ENCODE measurements at regions of chr1 and their contacts with region 1.

Region 1: GRCh38 chr1:181142096-181142958 is 53.8 kb downstream of the IER5 start:
- DNase-seq: no peak
- ATAC-seq: peak; percentile 92
- H3K4me3 ChIP-seq: no peak overlapping the region
- H3K27ac ChIP-seq: no peak overlapping the region
- H3K4me1 ChIP-seq: peaks cover 37% of the 10 kb centered on the region
- H3K27me3 ChIP-seq: no peaks in the 10 kb centered on the region
- CTCF ChIP-seq: peak; percentile 94 to 98 (median 98); a peak in 5 of 6 replicates
- EP300 ChIP-seq: no peak
- POLR2A ChIP-seq: no peak
- RAD21 ChIP-seq: peak; percentile 99

Region 2: GRCh38 chr1:180863158-180863775 is 279.1 kb before region 1 on chr1:
- CTCF ChIA-PET with region 1: interaction called, 10 read pairs
- POLR2A ChIA-PET with region 1: no interaction called
- RAD21 ChIA-PET with region 1: interaction called, 7 read pairs
- SMC1A ChIA-PET with region 1: interaction called, 6 read pairs
- in situ Hi-C with region 1: no loop called
- intact Hi-C with region 1: no loop called
- DNase-seq: no peak
- ATAC-seq: no peak
- H3K4me3 ChIP-seq: no peak overlapping the region
- H3K27ac ChIP-seq: no peak overlapping the region
- H3K4me1 ChIP-seq: no peaks in the 10 kb centered on the region
- H3K27me3 ChIP-seq: no peaks in the 10 kb centered on the region
- CTCF ChIP-seq: peak; percentile 51 to 69 (median 59); a peak in 5 of 6 replicates
- EP300 ChIP-seq: no peak
- POLR2A ChIP-seq: no peak
- RAD21 ChIP-seq: peak; percentile 88

Region 3: GRCh38 chr1:180920702-180921101 is 221.6 kb before region 1 on chr1:
- CTCF ChIA-PET with region 1: interaction called, 18 read pairs
- POLR2A ChIA-PET with region 1: no interaction called
- RAD21 ChIA-PET with region 1: interaction called, 10 read pairs
- SMC1A ChIA-PET with region 1: interaction called, 19 read pairs
- in situ Hi-C with region 1: no loop called
- intact Hi-C with region 1: no loop called
- DNase-seq: no peak
- ATAC-seq: peak; percentile 38; the same call in 1 of the 3 replicates
- H3K4me3 ChIP-seq: no peak overlapping the region
- H3K27ac ChIP-seq: no peak overlapping the region
- H3K4me1 ChIP-seq: peaks cover 9% of the 10 kb centered on the region
- H3K27me3 ChIP-seq: peaks cover 0 to 3% of the 10 kb centered on the region in 2 experiments; a peak in 1 of 4 replicates
- CTCF ChIP-seq: peak; percentile 41 to 57 (median 48)
- EP300 ChIP-seq: no peak
- POLR2A ChIP-seq: no peak
- RAD21 ChIP-seq: peak; percentile 33; the same call in 1 of the 2 replicates

Region 4: GRCh38 chr1:181021811-181022434 is 120.4 kb before region 1 on chr1:
- CTCF ChIA-PET with region 1: interaction called, 26 read pairs
- POLR2A ChIA-PET with region 1: interaction called, 8 read pairs
- RAD21 ChIA-PET with region 1: interaction called, 14 read pairs
- SMC1A ChIA-PET with region 1: interaction called, 14 read pairs
- in situ Hi-C with region 1: no loop called
- intact Hi-C with region 1: no loop called
- DNase-seq: no peak
- ATAC-seq: peak; percentile 76
- H3K4me3 ChIP-seq: peak overlapping the region; percentile 90
- H3K27ac ChIP-seq: peak overlapping the region; percentile 89
- H3K4me1 ChIP-seq: peaks cover 12% of the 10 kb centered on the region
- H3K27me3 ChIP-seq: no peaks in the 10 kb centered on the region
- CTCF ChIP-seq: no peak
- EP300 ChIP-seq: no peak
- POLR2A ChIP-seq: no peak
- RAD21 ChIP-seq: no peak

Region 5: GRCh38 chr1:181062836-181063428 is 79.4 kb before region 1 on chr1:
- CTCF ChIA-PET with region 1: interaction called, 35 read pairs
- POLR2A ChIA-PET with region 1: interaction called, 9 read pairs
- RAD21 ChIA-PET with region 1: interaction called, 29 read pairs
- SMC1A ChIA-PET with region 1: interaction called, 46 read pairs
- in situ Hi-C with region 1: no loop called
- intact Hi-C with region 1: no loop called
- DNase-seq: peak; percentile 87
- ATAC-seq: peak; percentile 90
- H3K4me3 ChIP-seq: no peak overlapping the region
- H3K27ac ChIP-seq: peak overlapping the region; percentile 96
- H3K4me1 ChIP-seq: peaks cover 32% of the 10 kb centered on the region
- H3K27me3 ChIP-seq: no peaks in the 10 kb centered on the region
- CTCF ChIP-seq: no peak
- EP300 ChIP-seq: 0 out of 4 replicates have a peak, but pooled peaks of 1 of the 2 experiments have one; percentile 25
- POLR2A ChIP-seq: 0 out of 2 replicates have a peak, but pooled peaks have one; percentile 3
- RAD21 ChIP-seq: no peak

Region 6: DNA sequence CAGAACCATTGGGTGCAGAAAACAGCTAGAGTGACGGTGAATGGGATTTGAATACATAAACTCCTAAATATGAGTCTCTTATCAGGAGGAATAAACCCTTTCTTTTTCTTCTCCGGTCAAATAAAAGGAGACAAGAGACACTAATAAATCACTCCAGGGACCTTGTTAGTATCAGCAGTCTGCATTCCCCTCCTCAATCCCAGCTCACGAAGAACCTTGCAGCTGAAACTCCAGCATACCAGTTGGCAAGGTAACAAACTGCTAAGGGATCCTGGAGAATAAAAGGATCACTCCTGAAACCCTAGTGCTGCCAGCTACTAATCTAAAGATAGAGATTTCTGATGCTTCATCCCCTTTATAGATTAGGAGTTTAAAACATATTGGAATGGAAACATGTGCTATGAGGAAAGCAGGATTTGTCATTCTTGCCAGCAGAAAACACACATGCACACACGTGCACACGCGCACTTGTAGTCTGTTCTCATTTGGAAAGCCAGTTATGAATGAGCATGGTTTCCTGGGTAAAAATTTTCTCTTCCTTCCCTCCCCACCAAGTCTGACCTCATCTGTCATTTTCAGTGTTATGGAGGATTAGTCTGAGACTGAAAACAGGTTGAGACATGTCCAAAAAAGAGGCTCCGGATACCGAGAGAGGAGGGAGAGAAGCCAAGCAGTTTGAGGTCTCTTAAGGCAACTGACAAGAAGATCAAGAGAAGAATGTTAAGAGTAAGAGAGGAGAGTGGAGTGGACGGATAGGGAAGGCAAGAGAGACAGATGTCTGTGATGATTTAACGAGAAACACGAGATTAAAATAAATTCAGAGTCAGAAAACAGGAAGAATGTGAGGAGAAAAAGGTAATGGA is 42.9 kb before region 1 on chr1:
- CTCF ChIA-PET with region 1: interaction called, 1,067 read pairs
- POLR2A ChIA-PET with region 1: interaction called, 21 read pairs
- RAD21 ChIA-PET with region 1: interaction called, 966 read pairs
- SMC1A ChIA-PET with region 1: interaction called, 1,399 read pairs
- in situ Hi-C with region 1: no loop called
- intact Hi-C with region 1: no loop called
- DNase-seq: peak; percentile 95
- ATAC-seq: peak; percentile 60
- H3K4me3 ChIP-seq: peak overlapping the region; percentile 18
- H3K27ac ChIP-seq: peak overlapping the region; percentile 89
- H3K4me1 ChIP-seq: peaks cover 86% of the 10 kb centered on the region
- H3K27me3 ChIP-seq: no peaks in the 10 kb centered on the region
- CTCF ChIP-seq: no peak
- EP300 ChIP-seq: peak; percentile 67 to 90; a peak in 3 of 4 replicates
- POLR2A ChIP-seq: no peak
- RAD21 ChIP-seq: no peak; the same call in 1 of the 2 replicates

Region 7: DNA sequence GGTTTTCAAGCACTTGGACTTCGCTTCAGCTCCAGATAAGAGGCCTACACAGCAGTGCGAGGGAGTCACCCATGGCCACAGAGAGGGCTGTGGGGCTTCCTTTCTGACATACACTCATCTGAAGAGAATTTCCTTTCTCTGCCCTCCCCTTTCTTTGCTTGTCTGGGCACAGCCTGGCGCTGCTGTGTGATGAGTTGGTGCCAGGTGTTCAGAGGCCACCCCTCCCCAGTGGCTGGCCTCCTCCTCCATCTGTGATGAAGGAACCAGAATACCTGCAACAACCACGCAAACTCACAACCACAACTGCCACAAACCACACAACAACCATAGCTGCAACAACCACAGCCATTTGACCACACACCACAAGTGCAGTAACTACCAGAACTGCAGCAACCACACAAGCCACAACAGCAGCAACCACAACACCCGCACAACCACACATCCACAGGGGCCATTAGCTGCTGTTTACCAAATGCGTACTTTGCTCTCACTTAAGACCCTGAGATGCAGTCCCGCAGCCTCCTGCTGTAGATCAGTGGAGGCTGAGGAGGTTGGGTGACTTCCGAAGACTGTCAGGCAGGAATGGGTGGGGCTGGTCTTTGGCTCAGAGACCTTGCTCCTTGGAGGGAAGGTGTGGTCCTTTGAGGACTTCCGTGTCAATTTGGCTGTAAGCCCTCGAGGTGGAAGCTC is 17.3 kb after region 1 on chr1:
- CTCF ChIA-PET with region 1: interaction called, 81 read pairs
- POLR2A ChIA-PET with region 1: interaction called, 4 read pairs
- RAD21 ChIA-PET with region 1: interaction called, 22 read pairs
- SMC1A ChIA-PET with region 1: interaction called, 114 read pairs
- in situ Hi-C with region 1: no loop called
- intact Hi-C with region 1: no loop called
- DNase-seq: no peak
- ATAC-seq: peak; percentile 74
- H3K4me3 ChIP-seq: no peak overlapping the region
- H3K27ac ChIP-seq: no peak overlapping the region
- H3K4me1 ChIP-seq: peaks cover 10% of the 10 kb centered on the region
- H3K27me3 ChIP-seq: no peaks in the 10 kb centered on the region
- CTCF ChIP-seq: no peak
- EP300 ChIP-seq: peak in 1 of 2 experiments; percentile 25; a peak in 1 of 4 replicates
- POLR2A ChIP-seq: no peak
- RAD21 ChIP-seq: no peak

Measured in GM12878 (cell line).